Right ventricle myocardium superior (tissue), 1 donor: ENCODE measurements at regions of chr3 and their contacts with region 1.

Region 1: DNA sequence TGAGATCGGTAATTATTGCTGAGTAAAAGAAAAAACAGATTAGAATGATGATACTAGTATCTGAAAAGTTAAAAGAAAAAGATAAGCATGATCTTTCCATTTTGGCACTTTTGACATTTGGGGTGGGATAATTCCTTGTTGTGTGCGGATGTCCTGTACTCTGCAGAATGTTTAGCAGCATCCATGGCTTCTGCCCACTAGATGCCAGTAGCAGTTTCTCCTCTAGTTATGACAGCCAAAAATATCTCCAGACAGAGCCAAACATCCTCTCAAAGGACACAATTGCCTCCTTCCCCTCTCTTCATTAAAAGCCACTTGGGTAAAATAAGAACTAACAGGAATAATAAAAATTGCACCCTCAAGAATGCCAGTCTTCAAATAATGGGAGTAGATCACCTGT is 468.8 kb upstream of the GRM7 start:
- DNase-seq: no peak
- ATAC-seq: no peak

Region 2: GRCh38 chr3:6799264-6799915 is 407.3 kb after region 1 on chr3:
- intact Hi-C with region 1: loop called (anchors 5 kb)
- DNase-seq: no peak
- ATAC-seq: peak; percentile 75